ENCODE measurements at regions of chr17 and their contacts with region 1.

Region 1: GRCh38 chr17:61486135-61487120 is 34.2 kb downstream of the TBX4 start:
- DNase-seq: peak; percentile 80
- H3K4me3 ChIP-seq: no peak overlapping the region
- H3K27ac ChIP-seq: peak overlapping the region in 1 of 2 experiments; percentile 45; a peak in 2 of 4 replicates
- H3K4me1 ChIP-seq: peaks cover 0 to 48% of the 10 kb centered on the region in 2 experiments; a peak in 2 of 4 replicates
- H3K27me3 ChIP-seq: no peaks in the 10 kb centered on the region
- CTCF ChIP-seq: no peak
- EP300 ChIP-seq: 0 out of 4 replicates have a peak, but pooled peaks of 1 of the 2 experiments have one; percentile 25
- RAD21 ChIP-seq: no peak

Region 2: GRCh38 chr17:61467416-61468259 is 18.8 kb before region 1 on chr17:
- CTCF ChIA-PET with region 1: interaction called, 12 read pairs
- POLR2A ChIA-PET with region 1: interaction called, 3 read pairs
- DNase-seq: peak; percentile 76
- H3K4me3 ChIP-seq: no peak overlapping the region
- H3K27ac ChIP-seq: peak overlapping the region in 1 of 2 experiments; percentile 51; a peak in 1 of 4 replicates
- H3K4me1 ChIP-seq: peaks cover 0 to 24% of the 10 kb centered on the region in 2 experiments; a peak in 1 of 4 replicates
- H3K27me3 ChIP-seq: no peaks in the 10 kb centered on the region
- CTCF ChIP-seq: no peak
- EP300 ChIP-seq: no peak
- RAD21 ChIP-seq: no peak

Region 3: GRCh38 chr17:61475398-61476113 is 10.9 kb before region 1 on chr17:
- CTCF ChIA-PET with region 1: interaction called, 12 read pairs
- POLR2A ChIA-PET with region 1: interaction called, 3 read pairs
- DNase-seq: no peak
- H3K4me3 ChIP-seq: no peak overlapping the region
- H3K27ac ChIP-seq: no peak overlapping the region
- H3K4me1 ChIP-seq: peaks cover 0 to 32% of the 10 kb centered on the region in 2 experiments; a peak in 1 of 4 replicates
- H3K27me3 ChIP-seq: no peaks in the 10 kb centered on the region
- CTCF ChIP-seq: no peak
- EP300 ChIP-seq: no peak
- RAD21 ChIP-seq: no peak